ENCODE measurements at regions of chr17 and their contacts with region 1.

Region 1: GRCh38 chr17:43878260-43879175 is 28.8 kb downstream of the MPP2 start:
- DNase-seq: peak; percentile 87 to 98
- ATAC-seq: peak; percentile 83 to 94
- H3K4me3 ChIP-seq: no peak overlapping the region
- H3K27ac ChIP-seq: peak overlapping the region; percentile 33 to 54; a peak in 4 of 6 replicates
- H3K4me1 ChIP-seq: peaks cover 5% of the 10 kb centered on the region
- CTCF ChIP-seq: peak; percentile 96
- EP300 ChIP-seq: no peak
- POLR2A ChIP-seq: no peak
- RAD21 ChIP-seq: peak; percentile 85 to 88

Region 2: GRCh38 chr17:43680461-43680860 is 198.1 kb before region 1 on chr17:
- CTCF ChIA-PET with region 1: no interaction called
- POLR2A ChIA-PET with region 1: no interaction called
- DNase-seq: no peak
- ATAC-seq: no peak
- H3K4me3 ChIP-seq: no peak overlapping the region
- H3K27ac ChIP-seq: no peak overlapping the region
- H3K4me1 ChIP-seq: peaks cover 12% of the 10 kb centered on the region; the same call in 2 of the 3 replicates
- CTCF ChIP-seq: no peak
- EP300 ChIP-seq: no peak
- POLR2A ChIP-seq: no peak
- RAD21 ChIP-seq: no peak

Region 3: DNA sequence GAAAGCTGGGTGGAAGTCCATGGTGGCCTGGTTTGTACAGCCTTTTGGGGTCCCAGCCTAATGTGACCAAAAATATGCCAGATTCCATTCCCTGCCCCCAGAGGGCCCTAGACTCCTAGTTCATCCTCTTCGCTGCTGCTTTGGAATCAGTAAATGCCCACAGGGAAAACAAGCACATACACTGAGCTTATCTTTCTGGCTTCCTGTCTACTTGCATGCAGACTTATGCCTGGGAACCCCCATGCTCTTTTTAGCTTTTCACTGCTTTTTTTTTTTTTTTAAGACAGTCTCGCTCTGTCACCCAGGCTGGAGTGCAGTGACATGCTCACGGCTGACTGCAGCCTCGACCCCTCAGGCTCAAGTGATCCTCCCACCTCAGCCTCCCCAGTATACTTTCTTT is 37.7 kb before region 1 on chr17:
- CTCF ChIA-PET with region 1: interaction called, 57 read pairs
- POLR2A ChIA-PET with region 1: no interaction called
- DNase-seq: peak; percentile 49 to 67
- ATAC-seq: peak; percentile 27 to 58; a peak in 3 of 6 replicates
- H3K4me3 ChIP-seq: peak overlapping the region; percentile 20; the same call in 1 of the 3 replicates
- H3K27ac ChIP-seq: peak overlapping the region; percentile 80 to 83
- H3K4me1 ChIP-seq: peaks cover 39% of the 10 kb centered on the region
- CTCF ChIP-seq: peak; percentile 38; the same call in 2 of the 3 replicates
- EP300 ChIP-seq: no peak
- POLR2A ChIP-seq: no peak
- RAD21 ChIP-seq: peak; percentile 6 to 45; a peak in 3 of 5 replicates

Region 4: DNA sequence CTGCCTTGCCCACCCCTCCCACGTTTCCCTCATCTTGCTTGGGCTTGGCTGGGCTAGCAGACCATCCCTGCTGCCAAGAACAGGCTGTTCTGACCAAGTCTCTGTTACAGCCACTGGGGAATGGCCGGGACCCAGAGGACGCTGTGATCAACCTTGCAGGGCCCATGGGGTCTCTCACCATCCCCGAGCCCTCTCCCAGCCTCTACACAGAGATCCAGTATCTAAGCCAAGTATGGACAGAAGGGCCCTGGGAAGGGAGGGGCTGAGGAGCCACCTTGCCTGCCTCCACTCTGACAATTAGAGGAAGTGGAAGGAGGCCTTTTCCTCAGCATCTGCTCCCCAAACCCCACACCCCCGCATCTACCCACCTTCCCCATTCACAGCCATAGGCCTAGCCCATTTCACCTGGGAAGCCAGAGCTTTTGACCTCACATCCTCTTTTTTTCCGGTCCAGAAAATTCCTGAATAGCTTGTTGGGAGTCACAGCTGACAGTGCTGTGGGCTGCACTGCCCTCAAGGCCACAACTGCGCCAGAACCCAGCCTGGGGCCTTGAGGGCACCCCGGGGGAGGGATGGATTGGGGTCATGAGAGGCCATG is 17.4 kb before region 1 on chr17:
- CTCF ChIA-PET with region 1: interaction called, 161 read pairs
- POLR2A ChIA-PET with region 1: no interaction called
- DNase-seq: no peak
- ATAC-seq: no peak
- H3K4me3 ChIP-seq: no peak overlapping the region
- H3K27ac ChIP-seq: no peak overlapping the region; a peak in 1 of 6 replicates
- H3K4me1 ChIP-seq: peaks cover 5% of the 10 kb centered on the region; the same call in 1 of the 3 replicates
- CTCF ChIP-seq: no peak
- EP300 ChIP-seq: no peak
- POLR2A ChIP-seq: no peak
- RAD21 ChIP-seq: no peak

Region 5: DNA sequence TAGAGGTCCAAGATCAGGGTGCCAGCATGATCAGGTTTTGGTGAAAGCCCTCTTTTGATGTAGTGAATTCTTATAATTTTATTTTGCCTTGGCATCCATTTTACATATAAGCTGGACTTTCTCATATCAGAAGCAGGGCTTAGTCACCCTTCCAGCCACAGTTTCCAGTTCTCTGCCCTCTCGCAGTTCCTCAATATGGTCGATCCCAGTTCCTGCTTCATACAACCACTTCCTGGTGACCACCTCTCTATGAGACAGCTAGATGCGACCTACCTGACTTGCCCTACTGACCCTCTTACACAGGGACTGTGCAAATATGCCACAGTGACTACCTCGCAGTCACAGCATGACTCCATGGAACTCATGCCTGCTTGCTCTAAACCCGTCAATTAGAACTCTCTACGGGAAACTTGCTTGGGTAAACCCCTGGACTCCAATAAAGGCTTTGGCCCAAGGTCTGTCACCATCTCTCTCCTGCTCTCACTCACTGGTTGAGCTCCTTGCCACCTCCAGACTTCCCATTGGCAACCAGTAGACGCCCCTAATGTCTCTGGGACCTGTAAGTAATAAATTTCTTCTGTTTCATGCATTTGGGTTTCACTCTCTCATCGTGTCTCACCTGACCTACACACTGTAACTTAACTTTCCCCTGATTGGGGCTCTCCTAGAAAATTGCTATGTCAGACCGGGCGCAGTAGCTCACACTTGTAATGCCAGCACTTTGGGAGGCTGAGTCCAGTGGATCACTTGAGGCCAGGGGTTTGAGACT is 10.1 kb before region 1 on chr17:
- CTCF ChIA-PET with region 1: interaction called, 161 read pairs
- POLR2A ChIA-PET with region 1: no interaction called
- DNase-seq: no peak
- ATAC-seq: no peak
- H3K4me3 ChIP-seq: no peak overlapping the region
- H3K27ac ChIP-seq: no peak overlapping the region
- H3K4me1 ChIP-seq: peaks cover 6% of the 10 kb centered on the region; the same call in 2 of the 3 replicates
- CTCF ChIP-seq: no peak
- EP300 ChIP-seq: no peak
- POLR2A ChIP-seq: no peak
- RAD21 ChIP-seq: no peak

Region 6: GRCh38 chr17:43900183-43900857 is 21.8 kb after region 1 on chr17:
- CTCF ChIA-PET with region 1: interaction called, 412 read pairs
- POLR2A ChIA-PET with region 1: no interaction called
- DNase-seq: peak; percentile 88 to 100
- ATAC-seq: peak; percentile 95 to 99
- H3K4me3 ChIP-seq: peak overlapping the region; percentile 55
- H3K27ac ChIP-seq: peak overlapping the region; percentile 76 to 88
- H3K4me1 ChIP-seq: peaks cover 14% of the 10 kb centered on the region
- CTCF ChIP-seq: no peak
- EP300 ChIP-seq: no peak
- POLR2A ChIP-seq: peak; percentile 32; the same call in 1 of the 2 replicates
- RAD21 ChIP-seq: no peak

Region 7: GRCh38 chr17:43917348-43918018 is 39.0 kb after region 1 on chr17:
- CTCF ChIA-PET with region 1: interaction called, 412 read pairs
- POLR2A ChIA-PET with region 1: no interaction called
- DNase-seq: peak in 1 of 2 experiments; percentile 43
- ATAC-seq: peak; percentile 66 to 89; a peak in 3 of 6 replicates
- H3K4me3 ChIP-seq: no peak overlapping the region
- H3K27ac ChIP-seq: no peak overlapping the region
- H3K4me1 ChIP-seq: no peaks in the 10 kb centered on the region
- CTCF ChIP-seq: peak; percentile 25; the same call in 1 of the 3 replicates
- EP300 ChIP-seq: no peak
- POLR2A ChIP-seq: no peak
- RAD21 ChIP-seq: peak in 1 of 2 experiments; percentile 54; a peak in 3 of 5 replicates

Region 8: DNA sequence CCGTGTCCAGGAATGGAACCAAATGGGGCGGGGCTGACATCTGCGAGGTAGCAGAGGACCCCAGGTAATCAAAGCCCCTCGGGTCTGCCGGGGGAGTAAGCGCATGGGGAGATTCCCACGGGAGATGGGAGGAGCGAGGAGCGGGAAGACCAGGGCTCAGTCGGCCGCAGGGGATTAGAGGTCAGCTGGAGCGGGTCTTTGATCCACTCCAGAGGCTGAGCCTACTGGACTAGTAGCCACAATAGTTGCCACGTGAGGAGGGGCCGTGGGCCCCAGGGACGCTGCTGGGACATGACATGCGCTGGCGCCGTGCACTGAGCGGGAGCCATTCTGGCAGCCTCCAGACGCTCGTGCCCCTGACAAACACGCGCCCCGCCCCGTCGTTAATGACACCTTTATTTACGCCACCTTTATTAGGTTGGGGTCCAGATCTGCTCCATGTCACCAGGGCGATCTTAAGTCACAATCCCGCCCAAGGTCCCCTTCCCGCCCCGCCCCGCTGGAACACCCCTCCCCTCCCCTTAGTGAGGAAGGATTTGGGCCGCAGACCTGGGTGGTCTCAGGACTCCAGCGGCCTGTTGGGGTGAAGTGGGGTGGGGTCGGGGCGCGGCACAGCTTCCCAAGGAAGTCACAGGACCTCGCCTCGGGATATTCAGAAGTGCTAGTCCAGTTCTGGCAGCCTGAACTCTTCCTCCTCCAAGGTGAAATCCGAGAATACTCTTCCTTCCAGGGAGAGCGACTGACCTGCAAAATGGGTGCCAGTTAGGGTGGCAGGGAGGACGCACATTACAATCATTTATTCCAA is 48.7 kb after region 1 on chr17:
- CTCF ChIA-PET with region 1: interaction called, 46 read pairs
- POLR2A ChIA-PET with region 1: no interaction called
- DNase-seq: no peak
- ATAC-seq: no peak
- H3K4me3 ChIP-seq: no peak overlapping the region
- H3K27ac ChIP-seq: no peak overlapping the region
- H3K4me1 ChIP-seq: peaks cover 14% of the 10 kb centered on the region
- CTCF ChIP-seq: no peak
- EP300 ChIP-seq: no peak
- POLR2A ChIP-seq: no peak
- RAD21 ChIP-seq: no peak

Measured in A549 (cell line).